Common myeloid progenitor, CD34-positive (primary cell): ENCODE measurements at regions of chr4 and their contacts with region 1.

Region 1: DNA sequence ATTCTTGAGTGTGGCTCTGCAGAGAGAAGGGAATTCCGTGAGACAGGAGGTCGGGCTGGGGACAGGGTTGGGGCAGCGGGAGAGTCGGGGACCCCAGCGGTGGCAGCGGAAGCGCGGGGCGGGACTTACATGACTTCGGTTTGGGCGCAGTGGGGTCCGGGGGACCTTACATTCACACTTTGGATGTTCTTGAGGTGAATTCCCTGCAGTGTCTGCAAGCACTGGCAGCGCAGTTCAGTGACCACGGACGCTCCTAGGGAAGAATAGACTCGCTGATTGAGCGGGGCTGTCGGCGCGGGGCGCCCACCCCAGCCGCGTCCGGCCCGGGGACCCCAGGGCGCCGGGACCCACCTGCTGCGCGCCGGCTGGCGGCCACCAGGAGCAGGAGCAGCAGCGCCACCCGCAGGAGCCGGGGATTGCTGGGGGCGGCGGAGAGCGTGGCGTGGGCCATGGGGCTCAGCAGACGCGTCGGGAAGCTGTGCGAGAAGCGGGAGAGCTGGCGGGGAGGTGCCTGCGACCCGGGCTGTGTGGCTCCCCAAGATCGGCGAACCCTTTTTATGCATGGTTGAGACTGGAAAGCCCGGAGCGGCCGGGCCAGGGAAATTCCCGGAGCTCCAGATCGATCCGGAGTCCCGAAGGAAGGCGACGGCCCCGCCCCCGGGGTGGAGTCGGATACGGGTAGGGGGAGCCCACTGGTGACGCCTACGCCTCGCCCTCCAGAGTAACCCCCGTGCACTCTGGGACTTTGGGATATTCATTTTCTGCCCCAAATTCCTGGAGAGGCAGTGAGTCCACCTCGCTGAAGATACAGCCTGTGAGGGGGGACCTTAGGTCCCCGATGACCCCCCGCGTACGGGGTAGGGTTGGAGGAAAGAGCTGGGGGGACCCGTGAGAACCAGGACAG is at the start of gene CXCL3:
- DNase-seq: peak; percentile 58 to 82 (median 68)
- H3K4me3 ChIP-seq: peak within 1 kb of the TSS; percentile 78 to 96 (median 88)
- H3K27ac ChIP-seq: peak within 1 kb of the TSS; percentile 89 to 93
- H3K4me1 ChIP-seq: peaks cover 19 to 41% (median 28%) of the 10 kb centered on the region in 4 experiments
- H3K27me3 ChIP-seq: no peaks in the 10 kb centered on the region

Region 2: DNA sequence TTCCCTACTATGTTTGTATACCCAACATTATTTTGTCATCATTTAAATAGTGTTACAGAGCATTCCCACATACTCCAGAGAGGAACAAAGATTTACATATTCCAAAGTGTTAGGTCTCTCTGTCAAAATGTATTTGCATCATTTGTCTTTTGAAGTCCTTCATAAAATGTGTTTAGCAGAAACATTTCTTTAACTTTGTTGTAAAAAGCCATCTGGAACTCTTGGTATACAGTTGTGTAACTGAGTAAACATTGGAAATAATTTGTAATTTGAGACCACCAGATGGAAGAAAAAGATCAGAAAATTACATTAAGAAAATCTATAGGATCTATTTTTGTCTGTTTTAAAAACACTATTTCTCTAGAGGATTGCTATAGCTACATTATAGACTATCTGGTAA is 690.9 kb before region 1 on chr4:
- CTCF ChIA-PET with region 1: no interaction called
- POLR2A ChIA-PET with region 1: no interaction called
- DNase-seq: no peak
- H3K4me3 ChIP-seq: no peak overlapping the region
- H3K27ac ChIP-seq: no peak overlapping the region
- H3K4me1 ChIP-seq: no peaks in the 10 kb centered on the region
- H3K27me3 ChIP-seq: no peaks in the 10 kb centered on the region

Region 3: DNA sequence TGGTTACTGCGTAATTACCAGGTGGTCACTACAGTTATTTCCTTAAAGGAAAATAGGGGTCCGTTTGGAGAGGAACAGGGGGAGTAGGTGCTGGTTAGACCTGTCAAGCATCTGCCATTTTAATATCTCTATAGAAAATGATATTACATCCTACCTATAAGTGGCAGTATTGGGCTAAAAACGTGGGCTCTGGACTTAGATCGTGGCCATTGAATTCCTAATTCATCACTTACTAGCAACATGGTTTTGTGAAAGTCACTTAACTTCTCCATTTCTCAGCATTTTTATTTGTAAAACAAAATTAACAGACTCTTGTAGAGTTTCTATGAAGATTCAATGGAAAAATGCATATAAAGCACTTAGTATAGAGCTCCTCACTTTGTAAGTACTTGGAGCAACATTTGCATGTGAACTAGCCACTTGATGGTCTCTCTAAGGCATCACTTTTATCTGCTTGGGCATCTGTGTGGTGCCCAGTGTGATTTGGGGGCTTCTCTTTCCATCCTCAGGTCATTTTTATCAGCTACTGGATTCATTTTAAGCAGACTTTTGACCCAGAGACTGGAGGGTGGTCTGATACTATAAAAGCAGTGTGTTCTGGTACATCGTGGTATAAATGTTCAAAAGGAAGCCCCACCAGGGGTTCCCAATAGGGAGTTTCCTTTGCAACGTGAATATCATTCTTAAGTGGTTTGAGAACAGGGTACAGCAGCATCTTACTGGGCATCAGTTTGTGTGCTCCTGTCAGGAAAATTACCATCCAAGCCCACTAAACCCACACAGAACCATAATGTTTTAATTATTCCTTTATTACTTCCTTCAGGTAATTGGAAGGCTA is 375.5 kb before region 1 on chr4:
- CTCF ChIA-PET with region 1: interaction called, 19 read pairs
- POLR2A ChIA-PET with region 1: no interaction called
- DNase-seq: peak; percentile 61 to 81 (median 81)
- H3K4me3 ChIP-seq: no peak overlapping the region
- H3K27ac ChIP-seq: no peak overlapping the region
- H3K4me1 ChIP-seq: peaks cover 5 to 25% (median 12%) of the 10 kb centered on the region in 4 experiments
- H3K27me3 ChIP-seq: no peaks in the 10 kb centered on the region

Region 4: DNA sequence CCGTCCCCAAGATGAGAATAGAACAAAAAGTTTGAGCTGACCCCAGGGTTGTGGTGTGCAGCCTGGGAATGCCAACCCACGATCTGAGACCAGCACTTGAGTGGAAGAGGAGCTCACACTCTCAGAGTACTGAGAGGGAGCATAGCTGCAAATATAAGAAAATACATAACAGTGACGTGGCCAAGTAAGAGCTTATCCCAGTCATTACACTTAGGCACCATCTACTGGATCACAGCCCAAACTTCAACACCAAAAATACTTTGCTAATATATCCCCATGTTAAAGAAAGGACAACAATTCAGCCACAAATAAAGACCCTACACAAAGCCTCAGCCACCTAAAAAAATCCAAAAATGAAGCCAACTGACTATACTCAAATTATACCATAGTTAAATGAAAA is 235.2 kb before region 1 on chr4:
- CTCF ChIA-PET with region 1: no interaction called
- POLR2A ChIA-PET with region 1: no interaction called
- DNase-seq: no peak
- H3K4me3 ChIP-seq: no peak overlapping the region
- H3K27ac ChIP-seq: no peak overlapping the region
- H3K4me1 ChIP-seq: no peaks in the 10 kb centered on the region
- H3K27me3 ChIP-seq: no peaks in the 10 kb centered on the region

Region 5: DNA sequence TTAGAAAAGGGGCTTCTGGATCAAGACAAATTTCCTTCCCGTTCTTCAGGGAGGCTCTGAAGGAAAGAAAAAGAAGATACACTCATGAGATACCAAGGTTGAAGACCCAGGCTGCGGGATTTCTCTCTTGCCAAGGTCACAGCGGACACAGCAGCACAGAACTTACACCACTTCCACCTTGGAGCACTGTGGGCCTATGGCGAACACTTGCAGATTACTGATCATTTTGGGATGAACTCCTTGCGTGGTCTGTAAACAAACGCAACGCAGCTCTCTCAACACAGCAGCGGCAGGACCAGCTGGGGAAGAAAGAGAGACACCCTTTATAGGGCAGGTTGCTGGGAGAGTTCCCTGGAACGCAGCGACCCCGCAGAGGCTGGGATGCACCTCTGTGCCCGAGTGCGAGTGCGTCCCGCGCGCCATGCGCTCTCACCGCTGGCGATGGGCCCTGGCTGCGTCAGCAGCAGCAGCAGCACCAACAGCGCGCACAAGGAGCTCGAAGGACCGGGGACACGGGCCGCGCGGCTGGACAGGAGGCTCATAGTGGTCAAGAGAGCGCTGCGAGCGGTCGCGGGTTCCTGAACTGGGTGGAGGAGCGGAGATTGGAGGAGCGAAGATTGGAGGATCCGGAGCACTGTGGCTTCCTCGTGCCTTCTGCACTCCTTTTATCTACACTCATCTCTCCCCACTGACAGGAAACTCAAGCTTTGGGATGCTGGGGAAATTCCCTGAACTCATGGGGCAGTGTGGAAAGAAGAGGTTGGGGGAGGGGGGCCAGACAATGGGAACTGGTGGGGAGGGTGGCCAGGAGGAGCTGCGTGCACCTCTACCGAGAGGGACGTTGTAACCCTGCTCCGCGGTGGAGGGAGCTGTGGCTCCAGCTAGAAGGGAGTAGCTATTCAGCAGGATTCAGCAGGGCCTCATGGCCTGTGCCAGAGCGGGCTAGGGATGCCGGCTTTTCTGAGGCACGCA is 40.1 kb before region 1 on chr4 and contains the start of gene CXCL5:
- CTCF ChIA-PET with region 1: interaction called, 15 read pairs
- POLR2A ChIA-PET with region 1: no interaction called
- DNase-seq: peak; percentile 48 to 58 (median 49)
- H3K4me3 ChIP-seq: peak within 1 kb of the TSS in 5 of 7 experiments; percentile 37 to 74 (median 64)
- H3K27ac ChIP-seq: no peak within 1 kb of the TSS
- H3K4me1 ChIP-seq: peaks cover 0 to 10% (median 7%) of the 10 kb centered on the region in 4 experiments
- H3K27me3 ChIP-seq: peaks cover 0 to 14% (median 6%) of the 10 kb centered on the region in 5 experiments

Region 6: DNA sequence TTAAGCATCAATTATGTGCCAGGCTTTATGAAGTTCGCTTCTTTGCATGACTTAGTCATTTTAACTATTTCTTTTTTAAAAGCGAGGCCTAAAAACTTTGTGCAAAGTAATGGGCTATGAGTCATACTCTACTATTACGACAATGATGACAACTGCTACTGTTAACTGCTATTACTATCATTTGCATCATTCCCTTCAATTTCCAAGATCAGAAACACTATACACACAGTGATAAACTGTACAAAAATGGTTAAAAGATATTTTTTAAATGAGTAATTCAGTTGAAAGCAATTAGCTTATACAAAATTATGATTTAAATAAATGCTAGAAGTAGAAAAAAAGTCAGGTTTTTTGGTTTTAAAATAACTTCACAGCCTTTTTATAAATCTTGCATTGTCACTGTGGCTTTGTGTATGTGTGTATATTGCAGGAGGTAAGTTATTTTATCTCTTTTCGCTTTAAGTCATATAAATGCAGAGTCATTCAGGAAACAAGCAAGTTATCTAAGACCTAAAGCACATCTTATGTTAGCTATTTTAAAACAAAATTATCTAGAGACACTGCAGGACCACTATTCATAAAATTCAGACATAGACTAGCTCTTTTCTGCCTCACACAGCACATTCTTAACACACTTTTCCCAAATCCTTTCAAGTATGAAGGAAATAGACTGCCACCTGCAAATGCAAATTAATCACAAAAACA is 18.6 kb after region 1 on chr4:
- CTCF ChIA-PET with region 1: interaction called, 23 read pairs
- POLR2A ChIA-PET with region 1: no interaction called
- DNase-seq: peak; percentile 85 to 95 (median 91)
- H3K4me3 ChIP-seq: peak overlapping the region in 1 of 7 experiments; percentile 1
- H3K27ac ChIP-seq: peak overlapping the region; percentile 74 to 91
- H3K4me1 ChIP-seq: peaks cover 10 to 51% (median 30%) of the 10 kb centered on the region in 4 experiments
- H3K27me3 ChIP-seq: no peaks in the 10 kb centered on the region

Region 7: GRCh38 chr4:74098450-74098994 is 60.1 kb after region 1 on chr4:
- CTCF ChIA-PET with region 1: interaction called, 63 read pairs
- POLR2A ChIA-PET with region 1: interaction called, 5 read pairs
- DNase-seq: peak in 1 of 3 donors; percentile 60
- H3K4me3 ChIP-seq: peak overlapping the region; percentile 56 to 93 (median 75)
- H3K27ac ChIP-seq: peak overlapping the region; percentile 76 to 85
- H3K4me1 ChIP-seq: peaks cover 15 to 69% (median 44%) of the 10 kb centered on the region in 4 experiments
- H3K27me3 ChIP-seq: no peaks in the 10 kb centered on the region